GM12878 (cell line): ENCODE measurements at regions of chr5 and their contacts with region 1.

Region 1: DNA sequence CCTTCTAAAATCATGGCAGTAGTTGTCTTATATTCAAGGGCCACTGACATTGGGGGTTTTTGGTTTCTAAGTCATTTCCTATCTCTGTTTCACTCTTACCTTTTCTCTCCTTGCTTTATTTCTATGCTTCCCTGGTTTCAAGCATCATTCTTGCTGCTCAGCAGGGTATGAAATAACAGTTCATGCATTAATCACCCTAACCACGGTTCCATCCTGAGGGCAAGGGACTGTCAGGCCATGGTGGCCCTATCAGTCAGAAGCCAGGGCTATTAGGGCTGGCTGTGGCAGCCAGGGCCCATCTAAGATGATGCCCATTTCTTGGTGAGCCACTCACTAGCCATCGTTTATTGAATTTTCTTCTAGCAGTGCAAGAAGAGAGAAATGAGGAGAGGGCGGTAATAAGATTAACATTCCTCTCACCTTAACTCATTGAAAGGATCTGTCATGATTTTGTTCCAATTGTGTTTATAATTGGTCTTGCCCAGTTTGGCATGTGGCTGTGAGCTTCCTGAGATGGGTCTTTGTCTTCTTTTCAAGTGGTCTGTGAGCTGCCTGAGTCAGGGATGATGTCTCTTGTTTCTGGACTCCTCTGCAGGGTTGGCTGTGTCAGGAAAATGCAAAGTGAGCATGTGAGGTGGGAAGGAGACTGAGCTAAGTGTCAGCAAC is 45.2 kb downstream of the CYSTM1 start:
- DNase-seq: peak; percentile 54
- ATAC-seq: peak; percentile 91
- H3K4me3 ChIP-seq: no peak overlapping the region
- H3K27ac ChIP-seq: peak overlapping the region; percentile 38
- H3K4me1 ChIP-seq: peaks cover 30% of the 10 kb centered on the region
- H3K27me3 ChIP-seq: no peaks in the 10 kb centered on the region
- CTCF ChIP-seq: no peak
- EP300 ChIP-seq: no peak
- POLR2A ChIP-seq: no peak
- RAD21 ChIP-seq: no peak

Region 2: GRCh38 chr5:139863855-139864558 is 356.2 kb before region 1 on chr5:
- CTCF ChIA-PET with region 1: no interaction called
- POLR2A ChIA-PET with region 1: no interaction called
- RAD21 ChIA-PET with region 1: no interaction called
- SMC1A ChIA-PET with region 1: no interaction called
- in situ Hi-C with region 1: no loop called
- intact Hi-C with region 1: no loop called
- DNase-seq: no peak
- ATAC-seq: peak; percentile 91
- H3K4me3 ChIP-seq: no peak overlapping the region
- H3K27ac ChIP-seq: no peak overlapping the region
- H3K4me1 ChIP-seq: peaks cover 8% of the 10 kb centered on the region
- H3K27me3 ChIP-seq: no peaks in the 10 kb centered on the region
- CTCF ChIP-seq: peak; percentile 76 to 85 (median 81)
- EP300 ChIP-seq: no peak
- POLR2A ChIP-seq: no peak
- RAD21 ChIP-seq: peak; percentile 74

Region 3: GRCh38 chr5:140182075-140182709 is 38.0 kb before region 1 on chr5:
- CTCF ChIA-PET with region 1: interaction called, 5 read pairs
- POLR2A ChIA-PET with region 1: interaction called, 7 read pairs
- RAD21 ChIA-PET with region 1: interaction called, 3 read pairs
- SMC1A ChIA-PET with region 1: interaction called, 13 read pairs
- in situ Hi-C with region 1: no loop called
- intact Hi-C with region 1: no loop called
- DNase-seq: no peak
- ATAC-seq: peak; percentile 38
- H3K4me3 ChIP-seq: no peak overlapping the region
- H3K27ac ChIP-seq: no peak overlapping the region
- H3K4me1 ChIP-seq: peaks cover 18% of the 10 kb centered on the region
- H3K27me3 ChIP-seq: no peaks in the 10 kb centered on the region
- CTCF ChIP-seq: no peak
- EP300 ChIP-seq: no peak
- POLR2A ChIP-seq: no peak
- RAD21 ChIP-seq: no peak

Region 4: DNA sequence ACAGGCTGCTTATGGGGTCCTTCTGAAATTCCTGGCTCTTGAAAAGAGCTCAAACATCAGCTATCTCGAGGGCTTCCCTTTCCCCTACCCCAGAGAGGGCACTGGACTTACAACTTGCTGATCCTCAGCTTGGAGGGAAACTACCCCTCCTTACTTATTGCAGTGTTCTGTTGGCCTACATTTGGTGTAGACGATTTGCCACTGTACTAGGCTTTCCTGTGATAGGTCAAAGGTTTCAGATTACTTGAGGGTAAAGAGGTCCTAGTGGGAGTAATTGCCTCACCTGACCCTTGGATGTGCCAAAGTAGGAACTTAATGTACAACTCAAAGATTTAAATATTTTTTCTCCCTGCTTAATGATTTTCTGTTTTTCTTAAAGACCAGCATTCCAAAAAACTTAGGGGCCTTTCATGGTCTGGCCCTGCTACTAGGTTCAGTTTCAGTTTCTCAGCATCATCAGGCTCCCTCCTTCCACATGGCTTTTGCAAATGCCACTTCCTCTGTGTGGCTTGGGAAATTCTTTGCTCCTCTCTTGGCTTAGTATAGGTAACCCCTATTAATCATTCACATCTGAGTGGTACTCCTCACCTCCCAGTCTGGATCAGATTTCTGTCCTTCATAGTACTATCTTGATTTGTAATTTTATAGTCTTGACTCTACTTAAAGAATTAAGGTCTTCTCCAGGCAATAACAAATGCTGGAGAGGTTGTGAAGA is 12.8 kb before region 1 on chr5:
- CTCF ChIA-PET with region 1: interaction called, 17 read pairs
- POLR2A ChIA-PET with region 1: interaction called, 6 read pairs
- RAD21 ChIA-PET with region 1: no interaction called
- SMC1A ChIA-PET with region 1: interaction called, 10 read pairs
- in situ Hi-C with region 1: no loop called
- intact Hi-C with region 1: no loop called
- DNase-seq: no peak
- ATAC-seq: peak; percentile 92
- H3K4me3 ChIP-seq: no peak overlapping the region
- H3K27ac ChIP-seq: peak overlapping the region; percentile 62
- H3K4me1 ChIP-seq: peaks cover 9% of the 10 kb centered on the region
- H3K27me3 ChIP-seq: no peaks in the 10 kb centered on the region
- CTCF ChIP-seq: no peak
- EP300 ChIP-seq: no peak
- POLR2A ChIP-seq: no peak
- RAD21 ChIP-seq: no peak